ENCODE measurements at regions of chr6 and their contacts with region 1.

Region 1: GRCh38 chr6:55266896-55267295 is 60.4 kb upstream of the GFRAL start:
- DNase-seq: no peak
- H3K4me3 ChIP-seq: no peak overlapping the region
- H3K27me3 ChIP-seq: no peaks in the 10 kb centered on the region
- CTCF ChIP-seq: no peak

Region 2: DNA sequence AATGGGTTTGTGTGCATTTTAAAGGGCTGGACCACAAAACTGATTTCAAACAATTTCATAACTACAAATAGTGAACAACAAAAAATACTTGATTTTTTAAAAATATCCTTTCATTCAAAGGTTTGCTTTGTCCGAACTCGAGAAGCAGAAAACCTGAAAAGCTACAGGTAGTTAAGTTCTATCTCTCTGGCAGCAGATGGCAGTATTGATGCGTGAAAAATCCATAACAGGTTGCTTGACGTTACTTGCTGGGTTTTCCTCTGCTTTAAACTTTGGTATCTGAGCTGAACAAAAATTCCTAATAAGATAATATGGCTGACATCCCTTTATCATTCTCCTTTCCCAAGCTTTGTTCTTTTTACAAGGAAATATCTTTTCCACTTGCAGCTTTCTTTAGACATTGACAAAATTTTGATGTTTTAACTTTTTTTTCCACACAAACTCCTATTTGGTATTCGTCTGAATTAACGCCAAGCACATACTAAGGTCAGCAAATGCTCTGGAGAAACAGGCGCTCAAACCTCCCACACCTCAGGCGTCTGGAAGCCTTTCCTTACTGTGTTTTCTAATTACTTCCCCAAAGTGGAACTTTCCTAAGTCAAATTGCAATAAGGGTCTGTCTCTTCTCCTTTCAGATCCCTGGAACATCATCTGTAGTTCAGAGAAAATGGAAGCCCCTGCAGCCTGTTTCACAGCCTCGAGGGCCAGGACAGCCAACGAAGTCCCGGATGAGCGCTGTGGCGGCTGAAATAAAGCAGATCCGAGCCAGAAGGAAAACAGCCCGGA is 10.0 kb after region 1 on chr6:
- CTCF ChIA-PET with region 1: interaction called, 10 read pairs
- POLR2A ChIA-PET with region 1: no interaction called
- DNase-seq: peak; percentile 2
- H3K4me3 ChIP-seq: no peak overlapping the region
- H3K27me3 ChIP-seq: 0 out of 2 replicates have a peak, but pooled peaks cover 1% of the 10 kb centered on the region
- CTCF ChIP-seq: peak; percentile 68

Measured in BJ (cell line).